GM12878 (cell line): ENCODE measurements at regions of chr1 and their contacts with region 1.

Region 1: DNA sequence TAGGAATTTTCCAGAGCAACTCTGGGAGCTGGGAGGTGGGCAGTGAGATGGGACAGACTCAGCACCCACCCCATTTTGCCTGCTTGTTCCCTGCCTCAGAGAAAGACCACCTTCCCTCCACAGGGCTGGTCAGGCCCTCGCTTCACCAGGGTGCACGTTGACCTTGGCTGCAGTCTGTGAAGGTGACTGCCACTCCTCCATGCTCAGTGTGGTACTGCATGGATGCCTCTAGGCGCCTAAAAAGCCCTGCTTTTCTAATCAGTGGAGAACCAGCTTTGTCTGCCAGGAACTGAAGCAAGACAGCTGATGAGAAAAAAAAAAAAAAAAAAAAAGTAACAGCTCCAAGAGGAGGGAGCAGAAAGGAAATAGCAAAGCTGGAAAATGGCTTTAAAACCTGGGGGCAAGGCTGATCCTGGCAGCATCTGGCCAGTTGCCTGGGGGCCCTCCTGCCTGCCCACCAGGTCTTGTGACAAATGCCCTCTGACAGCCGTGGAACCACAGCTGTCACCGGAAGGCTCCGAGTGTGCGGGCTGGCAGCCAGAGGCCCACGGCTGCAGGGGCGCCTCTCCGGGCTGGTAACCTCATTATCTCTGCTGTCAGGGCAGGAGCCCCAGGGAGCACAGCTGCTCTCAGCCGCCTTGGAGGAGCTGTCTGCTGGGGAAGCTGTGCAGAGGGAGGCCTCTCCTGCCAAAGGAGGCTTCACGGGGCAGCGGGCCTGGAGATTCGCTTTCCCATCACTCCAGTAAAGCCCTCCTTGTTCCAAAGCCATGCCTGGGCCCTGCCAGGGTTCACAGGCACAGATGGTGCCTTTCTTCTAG is 13.7 kb downstream of the KIAA1614 start:
- DNase-seq: no peak
- ATAC-seq: peak; percentile 32
- H3K4me3 ChIP-seq: no peak overlapping the region
- H3K27ac ChIP-seq: no peak overlapping the region
- H3K4me1 ChIP-seq: peaks cover 5% of the 10 kb centered on the region; the same call in 1 of the 2 replicates
- H3K27me3 ChIP-seq: peaks cover 0 to 3% of the 10 kb centered on the region in 2 experiments; a peak in 1 of 4 replicates
- CTCF ChIP-seq: no peak
- EP300 ChIP-seq: no peak
- POLR2A ChIP-seq: no peak
- RAD21 ChIP-seq: no peak

Region 2: GRCh38 chr1:180837020-180837419 is 89.4 kb before region 1 on chr1:
- CTCF ChIA-PET with region 1: no interaction called
- POLR2A ChIA-PET with region 1: no interaction called
- RAD21 ChIA-PET with region 1: no interaction called
- SMC1A ChIA-PET with region 1: no interaction called
- in situ Hi-C with region 1: no loop called
- intact Hi-C with region 1: no loop called
- DNase-seq: no peak
- ATAC-seq: no peak
- H3K4me3 ChIP-seq: no peak overlapping the region
- H3K27ac ChIP-seq: no peak overlapping the region
- H3K4me1 ChIP-seq: no peaks in the 10 kb centered on the region
- H3K27me3 ChIP-seq: no peaks in the 10 kb centered on the region
- CTCF ChIP-seq: no peak
- EP300 ChIP-seq: no peak
- POLR2A ChIP-seq: no peak
- RAD21 ChIP-seq: no peak

Region 3: DNA sequence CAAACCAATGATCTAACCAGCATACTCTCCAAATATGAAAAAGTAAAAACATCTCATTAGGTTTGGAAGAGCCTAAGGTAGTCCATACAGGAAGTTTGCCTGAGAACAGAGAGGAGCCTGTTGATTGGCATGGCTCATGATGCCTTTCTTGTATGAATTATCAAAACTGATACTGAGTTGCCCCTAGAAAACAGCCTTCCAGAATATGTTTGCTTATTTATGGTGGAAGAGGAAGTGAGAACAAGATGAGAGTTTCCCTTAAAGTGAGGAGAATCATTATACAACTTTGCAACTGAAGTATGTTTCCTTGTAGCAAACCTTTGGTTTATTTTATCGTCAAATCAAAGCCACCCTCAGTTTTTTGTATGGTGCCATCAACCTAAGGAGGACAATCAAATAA is 37.5 kb before region 1 on chr1:
- CTCF ChIA-PET with region 1: interaction called, 344 read pairs
- POLR2A ChIA-PET with region 1: no interaction called
- RAD21 ChIA-PET with region 1: interaction called, 215 read pairs
- SMC1A ChIA-PET with region 1: interaction called, 304 read pairs
- in situ Hi-C with region 1: no loop called
- intact Hi-C with region 1: no loop called
- DNase-seq: peak; percentile 50
- ATAC-seq: peak; percentile 96
- H3K4me3 ChIP-seq: no peak overlapping the region
- H3K27ac ChIP-seq: peak overlapping the region; percentile 10; the same call in 1 of the 2 replicates
- H3K4me1 ChIP-seq: peaks cover 8% of the 10 kb centered on the region
- H3K27me3 ChIP-seq: no peaks in the 10 kb centered on the region
- CTCF ChIP-seq: no peak
- EP300 ChIP-seq: peak in 1 of 2 experiments; percentile 62; a peak in 1 of 4 replicates
- POLR2A ChIP-seq: no peak
- RAD21 ChIP-seq: no peak